Activated CD8-positive, alpha-beta T cell treated with anti-CD3 and anti-CD28 coated beads for 36 hours (primary cell): ENCODE measurements at regions of chr20 and their contacts with region 1.

Region 1: GRCh38 chr20:63864847-63865640 is at the start of gene TPD52L2:
- DNase-seq: peak; percentile 99
- ATAC-seq: peak; percentile 85
- H3K4me3 Mint-ChIP-seq: peak within 1 kb of the TSS; percentile 98
- H3K27ac Mint-ChIP-seq: peak within 1 kb of the TSS; percentile 99
- H3K4me1 Mint-ChIP-seq: peaks cover 19% of the 10 kb centered on the region
- H3K27me3 Mint-ChIP-seq: no peaks in the 10 kb centered on the region
- CTCF ChIP-seq: no peak
- total RNA-seq, gene TPD52L2: 43.1 to 44.6 TPM

Region 2: DNA sequence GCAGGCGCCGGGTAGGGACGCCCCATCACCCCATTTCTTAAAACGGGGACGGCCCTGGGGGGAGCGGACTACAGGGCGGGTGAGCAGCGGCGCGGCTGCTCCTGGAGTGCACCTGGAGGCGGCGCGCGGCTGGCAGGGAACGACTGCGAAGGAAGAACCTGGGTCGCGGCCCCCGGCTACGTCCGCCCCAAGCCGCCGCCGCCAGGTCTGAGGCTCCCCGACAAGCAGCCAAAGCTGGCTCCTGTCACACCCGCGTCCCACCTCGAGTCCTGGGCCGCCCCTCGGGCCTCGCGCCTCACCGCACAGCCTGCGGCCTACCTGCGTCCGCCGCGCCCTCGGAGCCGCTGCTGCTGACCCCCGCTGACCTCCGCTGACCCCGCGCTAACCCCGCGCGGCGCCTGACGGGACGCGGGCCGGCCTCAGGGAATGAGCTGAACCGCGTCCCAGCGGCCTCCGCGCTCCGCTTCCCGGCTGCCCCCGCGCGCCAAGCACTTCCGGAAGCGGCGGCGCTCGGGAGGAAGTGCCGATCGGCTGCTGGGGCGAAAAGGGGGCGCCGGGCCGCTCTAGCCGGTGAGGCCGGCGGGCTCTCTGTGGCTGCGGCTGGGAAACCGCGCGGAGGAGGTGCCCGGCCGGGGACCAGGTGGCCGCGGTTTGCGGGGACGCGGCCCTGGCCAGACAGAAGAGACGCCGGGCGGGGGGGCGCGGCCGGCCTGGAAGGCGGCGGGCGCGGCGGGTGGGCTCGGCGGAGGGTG is 157.3 kb before region 1 on chr20 and contains the starts of genes ARFRP1 and ZGPAT:
- CTCF ChIA-PET with region 1: interaction called, 28 read pairs
- POLR2A ChIA-PET with region 1: interaction called, 5 read pairs
- intact Hi-C with region 1: loop called (anchors 10 kb)
- DNase-seq: peak; percentile 89
- ATAC-seq: peak; percentile 90
- H3K4me3 Mint-ChIP-seq: peak within 1 kb of the TSS; percentile 87
- H3K27ac Mint-ChIP-seq: peak within 1 kb of the TSS; percentile 77
- H3K4me1 Mint-ChIP-seq: peaks cover 41% of the 10 kb centered on the region
- H3K27me3 Mint-ChIP-seq: no peaks in the 10 kb centered on the region
- CTCF ChIP-seq: no peak
- total RNA-seq, gene ARFRP1: 41.7 to 44.2 TPM
- total RNA-seq, gene ZGPAT: 22.4 to 22.5 TPM

Region 3: DNA sequence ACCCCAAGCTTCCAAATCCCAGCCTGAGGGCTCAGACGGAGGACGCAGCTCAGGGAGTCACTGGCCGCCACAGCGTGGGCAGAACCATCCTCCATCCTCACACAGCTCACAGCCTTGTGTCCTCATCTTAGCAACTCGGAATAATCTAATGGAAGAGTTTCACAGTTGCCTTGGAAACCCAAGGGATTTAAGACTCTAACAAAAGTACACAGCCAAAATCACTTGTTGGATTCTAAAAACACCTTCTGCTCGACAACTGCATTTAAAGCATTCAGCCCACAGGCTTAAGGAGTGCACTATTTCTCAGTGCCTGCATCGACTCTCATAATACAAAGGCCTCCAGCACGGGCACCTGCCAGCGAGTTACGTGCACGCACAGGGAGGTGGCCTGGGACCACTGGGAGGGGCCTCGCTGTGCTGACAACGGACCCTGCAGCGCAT is 79.3 kb before region 1 on chr20:
- CTCF ChIA-PET with region 1: interaction called, 22 read pairs
- POLR2A ChIA-PET with region 1: no interaction called
- intact Hi-C with region 1: no loop called
- DNase-seq: no peak
- ATAC-seq: no peak
- H3K4me3 Mint-ChIP-seq: no peak overlapping the region
- H3K27ac Mint-ChIP-seq: no peak overlapping the region
- H3K4me1 Mint-ChIP-seq: peaks cover 11% of the 10 kb centered on the region
- H3K27me3 Mint-ChIP-seq: no peaks in the 10 kb centered on the region
- CTCF ChIP-seq: no peak

Region 4: GRCh38 chr20:63844445-63844991 is 20.5 kb before region 1 on chr20:
- CTCF ChIA-PET with region 1: no interaction called
- POLR2A ChIA-PET with region 1: no interaction called
- intact Hi-C with region 1: no loop called
- DNase-seq: no peak
- ATAC-seq: no peak
- H3K4me3 Mint-ChIP-seq: no peak overlapping the region
- H3K27ac Mint-ChIP-seq: no peak overlapping the region
- H3K4me1 Mint-ChIP-seq: peaks cover 6% of the 10 kb centered on the region
- H3K27me3 Mint-ChIP-seq: peaks cover 34% of the 10 kb centered on the region
- CTCF ChIP-seq: no peak

Region 5: DNA sequence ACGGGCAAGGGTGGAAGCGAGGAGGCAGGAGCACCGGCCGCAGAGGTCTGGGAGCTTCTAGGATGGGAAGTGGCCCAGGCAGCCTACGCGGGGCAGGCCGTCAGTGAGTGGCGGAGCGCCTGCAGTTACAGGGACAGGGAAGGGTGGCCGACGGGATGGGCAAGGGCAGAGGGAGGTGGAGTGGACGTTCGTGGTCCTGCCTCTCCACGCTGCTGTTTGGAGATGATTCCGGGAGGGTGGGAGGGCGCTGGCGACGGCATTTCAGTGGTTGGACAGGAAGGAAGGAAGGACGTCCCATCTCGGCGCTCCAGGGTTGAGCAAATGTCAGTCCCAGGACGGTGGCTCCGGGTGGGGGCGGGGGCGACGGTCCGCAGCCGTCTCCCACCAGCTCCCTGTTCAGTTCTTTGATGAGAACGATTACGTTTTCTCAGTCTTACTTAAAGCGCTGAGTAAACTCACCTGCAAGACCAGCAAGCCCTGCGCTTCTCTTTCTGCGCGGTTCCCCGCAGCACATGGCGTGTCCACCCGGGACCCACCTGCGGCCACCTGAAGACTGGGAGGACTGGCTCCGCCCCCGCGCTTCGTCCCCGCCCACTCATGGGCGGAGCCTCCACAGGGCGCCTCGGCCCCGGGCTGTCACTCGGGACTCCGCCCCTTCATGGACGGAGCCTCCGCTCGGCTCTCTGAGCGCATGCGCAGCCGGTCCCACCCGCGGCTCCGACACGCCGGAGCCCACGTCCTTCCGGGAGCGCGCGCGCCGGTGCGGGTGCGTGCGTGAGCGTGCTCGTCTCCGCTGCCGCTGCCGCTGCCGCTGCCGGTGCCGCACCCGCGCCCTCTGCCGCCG is 29.5 kb after region 1 on chr20 and contains the start of gene DNAJC5:
- CTCF ChIA-PET with region 1: interaction called, 7 read pairs
- POLR2A ChIA-PET with region 1: interaction called, 25 read pairs
- intact Hi-C with region 1: no loop called
- DNase-seq: peak; percentile 93
- ATAC-seq: peak; percentile 96
- H3K4me3 Mint-ChIP-seq: peak within 1 kb of the TSS; percentile 88
- H3K27ac Mint-ChIP-seq: peak within 1 kb of the TSS; percentile 95
- H3K4me1 Mint-ChIP-seq: peaks cover 32% of the 10 kb centered on the region
- H3K27me3 Mint-ChIP-seq: no peaks in the 10 kb centered on the region
- CTCF ChIP-seq: no peak
- total RNA-seq, gene DNAJC5: 32.2 to 32.5 TPM

Region 6: GRCh38 chr20:63908008-63908624 is 43.1 kb after region 1 on chr20:
- CTCF ChIA-PET with region 1: no interaction called
- POLR2A ChIA-PET with region 1: no interaction called
- intact Hi-C with region 1: no loop called
- DNase-seq: no peak
- ATAC-seq: no peak
- H3K4me3 Mint-ChIP-seq: no peak overlapping the region
- H3K27ac Mint-ChIP-seq: no peak overlapping the region
- H3K4me1 Mint-ChIP-seq: peaks cover 39% of the 10 kb centered on the region
- H3K27me3 Mint-ChIP-seq: no peaks in the 10 kb centered on the region
- CTCF ChIP-seq: no peak

Region 7: DNA sequence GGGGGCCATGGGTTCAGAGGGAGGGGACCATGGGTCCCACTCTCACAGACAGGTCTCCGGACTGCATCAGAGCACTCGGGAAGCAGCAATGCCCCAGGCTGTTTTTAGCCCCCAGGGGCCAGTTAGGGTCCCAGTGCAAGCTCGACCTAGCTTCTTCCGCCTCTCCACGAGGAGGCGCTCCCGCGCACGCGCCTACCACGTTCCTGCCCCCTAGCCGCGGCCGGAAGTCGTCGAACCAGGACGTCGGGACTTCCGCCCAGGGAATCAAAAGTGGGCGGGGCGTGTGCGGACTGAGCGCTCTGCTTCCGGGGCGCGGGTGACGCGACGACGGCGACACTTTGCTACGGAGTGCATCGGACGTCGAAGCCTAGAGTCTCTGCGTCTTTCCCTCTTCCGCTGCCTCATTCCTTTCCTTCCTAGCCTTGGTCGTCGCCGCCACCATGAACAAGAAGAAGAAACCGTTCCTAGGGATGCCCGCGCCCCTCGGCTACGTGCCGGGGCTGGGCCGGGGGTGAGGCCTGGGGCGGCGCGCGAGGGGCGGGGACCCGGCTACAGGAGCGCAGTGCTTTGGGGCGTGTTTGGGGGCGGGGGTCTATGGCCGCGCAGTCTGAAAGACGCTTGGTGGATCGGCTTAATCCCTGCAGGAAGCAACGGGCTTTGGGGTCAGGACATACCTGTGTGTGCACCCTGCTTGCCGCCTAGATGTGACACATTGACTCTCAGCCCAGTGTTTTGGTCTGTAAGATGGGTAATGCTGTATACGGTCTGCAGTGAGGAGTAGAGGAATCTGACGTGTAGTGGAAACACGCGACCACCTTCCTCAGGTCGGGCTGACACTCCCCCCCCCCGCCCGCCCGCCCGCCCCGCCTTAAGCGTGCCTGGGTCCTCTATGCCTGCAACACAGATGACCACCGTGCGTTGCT is 116.0 kb after region 1 on chr20 and contains the start of gene PRPF6:
- CTCF ChIA-PET with region 1: interaction called, 12 read pairs
- POLR2A ChIA-PET with region 1: interaction called, 3 read pairs
- intact Hi-C with region 1: no loop called
- DNase-seq: peak; percentile 96
- ATAC-seq: peak; percentile 55
- H3K4me3 Mint-ChIP-seq: peak within 1 kb of the TSS; percentile 87
- H3K27ac Mint-ChIP-seq: peak within 1 kb of the TSS; percentile 98
- H3K4me1 Mint-ChIP-seq: peaks cover 60% of the 10 kb centered on the region
- H3K27me3 Mint-ChIP-seq: no peaks in the 10 kb centered on the region
- CTCF ChIP-seq: peak; percentile 87
- total RNA-seq, gene PRPF6: 53.0 to 55.5 TPM